ENCODE measurements at regions of chr1 and their contacts with region 1.

Region 1: GRCh38 chr1:32761253-32761880 is 55.8 kb downstream of the YARS1 start:
- DNase-seq: peak; percentile 26
- ATAC-seq: peak; percentile 75
- H3K4me3 ChIP-seq: no peak overlapping the region
- H3K27ac ChIP-seq: no peak overlapping the region
- H3K4me1 ChIP-seq: peaks cover 14% of the 10 kb centered on the region
- H3K27me3 ChIP-seq: no peaks in the 10 kb centered on the region; a peak in 1 of 4 replicates
- CTCF ChIP-seq: no peak
- EP300 ChIP-seq: no peak
- POLR2A ChIP-seq: no peak
- RAD21 ChIP-seq: no peak

Region 2: GRCh38 chr1:32736812-32737791 is 24.3 kb before region 1 on chr1:
- CTCF ChIA-PET with region 1: no interaction called
- POLR2A ChIA-PET with region 1: no interaction called
- RAD21 ChIA-PET with region 1: no interaction called
- SMC1A ChIA-PET with region 1: no interaction called
- in situ Hi-C with region 1: no loop called
- intact Hi-C with region 1: no loop called
- DNase-seq: no peak
- ATAC-seq: no peak
- H3K4me3 ChIP-seq: no peak overlapping the region
- H3K27ac ChIP-seq: no peak overlapping the region
- H3K4me1 ChIP-seq: peaks cover 7% of the 10 kb centered on the region
- H3K27me3 ChIP-seq: peaks cover 0 to 6% of the 10 kb centered on the region in 2 experiments
- CTCF ChIP-seq: no peak
- EP300 ChIP-seq: no peak
- POLR2A ChIP-seq: no peak
- RAD21 ChIP-seq: no peak

Region 3: DNA sequence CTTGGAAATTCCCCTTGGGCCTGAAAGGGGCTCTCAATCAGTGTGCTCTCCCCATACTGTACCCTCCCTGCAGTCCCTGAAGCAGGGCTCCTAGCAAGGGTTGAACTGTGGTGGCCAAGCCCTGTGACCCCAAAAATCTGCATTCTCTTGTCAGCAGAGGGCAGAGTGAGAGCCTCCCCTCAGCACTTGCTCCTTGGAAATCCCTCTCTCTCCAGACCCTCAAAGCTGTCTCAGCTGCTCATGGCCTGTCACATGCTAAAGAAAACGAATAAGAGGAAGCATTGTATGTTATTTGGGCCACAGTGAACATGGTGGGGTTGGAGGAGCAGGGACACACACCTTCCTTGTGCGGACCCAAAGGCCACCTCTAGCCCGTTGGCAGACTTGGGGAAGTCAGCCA is 11.6 kb before region 1 on chr1:
- CTCF ChIA-PET with region 1: interaction called, 7 read pairs
- POLR2A ChIA-PET with region 1: no interaction called
- RAD21 ChIA-PET with region 1: no interaction called
- SMC1A ChIA-PET with region 1: interaction called, 12 read pairs
- in situ Hi-C with region 1: no loop called
- intact Hi-C with region 1: no loop called
- DNase-seq: no peak
- ATAC-seq: peak; percentile 17; the same call in 2 of the 3 replicates
- H3K4me3 ChIP-seq: no peak overlapping the region
- H3K27ac ChIP-seq: no peak overlapping the region
- H3K4me1 ChIP-seq: peaks cover 7% of the 10 kb centered on the region
- H3K27me3 ChIP-seq: no peaks in the 10 kb centered on the region; a peak in 1 of 4 replicates
- CTCF ChIP-seq: peak in 1 of 3 experiments; percentile 17; a peak in 1 of 6 replicates
- EP300 ChIP-seq: no peak
- POLR2A ChIP-seq: no peak
- RAD21 ChIP-seq: no peak

Region 4: DNA sequence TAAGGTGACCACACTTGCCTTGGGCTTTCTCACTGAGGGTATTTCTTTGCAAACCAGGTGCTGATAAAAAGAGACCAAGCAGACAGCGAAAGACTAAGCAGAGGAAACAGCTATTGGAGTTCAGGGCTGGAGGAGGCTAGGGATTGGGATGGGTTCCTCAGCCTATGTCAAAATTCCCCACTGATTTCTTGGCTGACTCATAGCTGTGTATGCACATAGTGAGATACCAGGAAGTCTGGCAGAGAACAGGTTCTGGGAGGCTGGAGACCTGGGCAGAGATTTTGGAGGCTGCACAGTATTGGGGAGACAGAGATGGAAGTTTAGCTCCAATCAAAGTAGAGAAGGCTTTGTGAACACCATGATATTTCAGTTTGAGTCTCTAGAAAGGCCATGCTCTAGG is 30.5 kb after region 1 on chr1:
- CTCF ChIA-PET with region 1: no interaction called
- POLR2A ChIA-PET with region 1: no interaction called
- RAD21 ChIA-PET with region 1: no interaction called
- SMC1A ChIA-PET with region 1: no interaction called
- in situ Hi-C with region 1: no loop called
- intact Hi-C with region 1: no loop called
- DNase-seq: no peak
- ATAC-seq: no peak
- H3K4me3 ChIP-seq: no peak overlapping the region
- H3K27ac ChIP-seq: no peak overlapping the region
- H3K4me1 ChIP-seq: peaks cover 2% of the 10 kb centered on the region; the same call in 1 of the 2 replicates
- H3K27me3 ChIP-seq: no peaks in the 10 kb centered on the region
- CTCF ChIP-seq: no peak
- EP300 ChIP-seq: no peak
- POLR2A ChIP-seq: no peak
- RAD21 ChIP-seq: no peak

Region 5: GRCh38 chr1:32848354-32849063 is 87.1 kb after region 1 on chr1:
- CTCF ChIA-PET with region 1: no interaction called
- POLR2A ChIA-PET with region 1: no interaction called
- RAD21 ChIA-PET with region 1: no interaction called
- SMC1A ChIA-PET with region 1: no interaction called
- in situ Hi-C with region 1: no loop called
- intact Hi-C with region 1: no loop called
- DNase-seq: no peak
- ATAC-seq: peak; percentile 95
- H3K4me3 ChIP-seq: no peak overlapping the region
- H3K27ac ChIP-seq: 0 out of 2 replicates have a peak overlapping the region, but pooled peaks have one; percentile 6
- H3K4me1 ChIP-seq: no peaks in the 10 kb centered on the region
- H3K27me3 ChIP-seq: no peaks in the 10 kb centered on the region
- CTCF ChIP-seq: no peak
- EP300 ChIP-seq: no peak
- POLR2A ChIP-seq: no peak
- RAD21 ChIP-seq: no peak

Measured in GM12878 (cell line).